Breast epithelium (tissue), 4 donors: ENCODE measurements at regions of chr1 and their contacts with region 1.

Region 1: GRCh38 chr1:112872551-112872962 is 83.4 kb downstream of the SLC16A1 start:
- DNase-seq: no peak
- H3K4me3 ChIP-seq: no peak overlapping the region
- H3K27ac ChIP-seq: no peak overlapping the region
- H3K4me1 ChIP-seq: no peaks in the 10 kb centered on the region
- H3K27me3 ChIP-seq: no peaks in the 10 kb centered on the region
- CTCF ChIP-seq: no peak
- POLR2A ChIP-seq: no peak

Region 2: GRCh38 chr1:113170519-113170918 is 298.0 kb after region 1 on chr1:
- intact Hi-C with region 1: loop called (anchors 5 kb)
- DNase-seq: no peak
- H3K4me3 ChIP-seq: no peak overlapping the region
- H3K27ac ChIP-seq: no peak overlapping the region
- H3K4me1 ChIP-seq: no peaks in the 10 kb centered on the region
- H3K27me3 ChIP-seq: no peaks in the 10 kb centered on the region
- CTCF ChIP-seq: no peak
- POLR2A ChIP-seq: no peak

Region 3: GRCh38 chr1:113780279-113781146 is 908.0 kb after region 1 on chr1:
- intact Hi-C with region 1: no loop called
- DNase-seq: no peak
- H3K4me3 ChIP-seq: no peak overlapping the region
- H3K27ac ChIP-seq: no peak overlapping the region
- H3K4me1 ChIP-seq: peaks cover 0 to 8% of the 10 kb centered on the region in 2 donors
- H3K27me3 ChIP-seq: no peaks in the 10 kb centered on the region
- CTCF ChIP-seq: no peak
- POLR2A ChIP-seq: no peak